Thyroid gland (tissue), 4 donors: ENCODE measurements at regions of chr12 and their contacts with region 1.

Region 1: GRCh38 chr12:102757154-102757881 is 159.7 kb downstream of the PAH start:
- DNase-seq: peak; percentile 18 to 26
- H3K4me3 ChIP-seq: no peak overlapping the region
- H3K27ac ChIP-seq: peak overlapping the region; percentile 42 to 56 (median 53)
- H3K4me1 ChIP-seq: no peaks in the 10 kb centered on the region
- H3K27me3 ChIP-seq: no peaks in the 10 kb centered on the region
- CTCF ChIP-seq: no peak
- POLR2A ChIP-seq: no peak

Region 2: DNA sequence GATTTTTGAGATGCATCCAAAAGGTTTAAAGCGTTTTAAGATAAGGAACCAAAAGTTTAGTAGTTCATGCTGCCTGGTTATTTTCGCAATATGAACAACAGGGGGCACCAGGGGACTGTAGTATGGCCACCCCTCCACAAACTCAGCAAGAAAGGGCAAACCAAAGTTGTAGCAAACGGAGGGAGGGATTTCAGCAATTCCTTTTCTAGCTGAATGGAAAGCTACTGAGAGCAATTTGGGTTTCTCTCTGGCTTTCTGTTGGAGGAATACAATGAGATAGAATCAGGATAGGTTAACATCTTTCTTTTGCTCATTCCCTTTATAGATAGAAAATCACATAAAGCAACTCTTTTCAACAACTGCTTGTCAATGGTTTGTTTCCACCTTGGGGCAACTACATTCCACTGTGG is 817.5 kb before region 1 on chr12:
- intact Hi-C with region 1: loop called (anchors 10 kb)
- DNase-seq: peak; percentile 42 to 53
- H3K4me3 ChIP-seq: no peak overlapping the region
- H3K27ac ChIP-seq: no peak overlapping the region
- H3K4me1 ChIP-seq: peaks cover 0 to 7% of the 10 kb centered on the region in 2 donors
- H3K27me3 ChIP-seq: no peaks in the 10 kb centered on the region
- CTCF ChIP-seq: peak; percentile 16 to 82 (median 64)
- POLR2A ChIP-seq: no peak

Region 3: GRCh38 chr12:102326987-102327386 is 430.3 kb before region 1 on chr12:
- intact Hi-C with region 1: no loop called
- DNase-seq: no peak
- H3K4me3 ChIP-seq: no peak overlapping the region
- H3K27ac ChIP-seq: no peak overlapping the region
- H3K4me1 ChIP-seq: peaks cover 4 to 11% of the 10 kb centered on the region in 2 donors
- H3K27me3 ChIP-seq: no peaks in the 10 kb centered on the region
- CTCF ChIP-seq: no peak
- POLR2A ChIP-seq: no peak

Region 4: GRCh38 chr12:102797528-102797927 is 40.2 kb after region 1 on chr12:
- intact Hi-C with region 1: no loop called
- DNase-seq: no peak
- H3K4me3 ChIP-seq: no peak overlapping the region
- H3K27ac ChIP-seq: no peak overlapping the region
- H3K4me1 ChIP-seq: no peaks in the 10 kb centered on the region
- H3K27me3 ChIP-seq: no peaks in the 10 kb centered on the region
- CTCF ChIP-seq: no peak
- POLR2A ChIP-seq: no peak